ENCODE measurements at regions of chr2 and their contacts with region 1.

Region 1: GRCh38 chr2:148644883-148645538 is 460 bp downstream of the EPC2 start:
- DNase-seq: peak; percentile 93 to 98 (median 95)
- H3K4me3 ChIP-seq: peak overlapping the region; percentile 85 to 98 (median 88)
- H3K4me3 Mint-ChIP-seq: peak overlapping the region; percentile 86 to 96
- H3K27ac ChIP-seq: peak overlapping the region; percentile 89 to 91
- H3K27ac Mint-ChIP-seq: peak overlapping the region; percentile 94 to 99 (median 98)
- H3K4me1 ChIP-seq: peaks cover 24 to 39% of the 10 kb centered on the region in 2 donors
- H3K4me1 Mint-ChIP-seq: peaks cover 43% of the 10 kb centered on the region
- H3K27me3 ChIP-seq: no peaks in the 10 kb centered on the region
- H3K27me3 Mint-ChIP-seq: no peaks in the 10 kb centered on the region
- CTCF ChIP-seq: no peak

Region 2: DNA sequence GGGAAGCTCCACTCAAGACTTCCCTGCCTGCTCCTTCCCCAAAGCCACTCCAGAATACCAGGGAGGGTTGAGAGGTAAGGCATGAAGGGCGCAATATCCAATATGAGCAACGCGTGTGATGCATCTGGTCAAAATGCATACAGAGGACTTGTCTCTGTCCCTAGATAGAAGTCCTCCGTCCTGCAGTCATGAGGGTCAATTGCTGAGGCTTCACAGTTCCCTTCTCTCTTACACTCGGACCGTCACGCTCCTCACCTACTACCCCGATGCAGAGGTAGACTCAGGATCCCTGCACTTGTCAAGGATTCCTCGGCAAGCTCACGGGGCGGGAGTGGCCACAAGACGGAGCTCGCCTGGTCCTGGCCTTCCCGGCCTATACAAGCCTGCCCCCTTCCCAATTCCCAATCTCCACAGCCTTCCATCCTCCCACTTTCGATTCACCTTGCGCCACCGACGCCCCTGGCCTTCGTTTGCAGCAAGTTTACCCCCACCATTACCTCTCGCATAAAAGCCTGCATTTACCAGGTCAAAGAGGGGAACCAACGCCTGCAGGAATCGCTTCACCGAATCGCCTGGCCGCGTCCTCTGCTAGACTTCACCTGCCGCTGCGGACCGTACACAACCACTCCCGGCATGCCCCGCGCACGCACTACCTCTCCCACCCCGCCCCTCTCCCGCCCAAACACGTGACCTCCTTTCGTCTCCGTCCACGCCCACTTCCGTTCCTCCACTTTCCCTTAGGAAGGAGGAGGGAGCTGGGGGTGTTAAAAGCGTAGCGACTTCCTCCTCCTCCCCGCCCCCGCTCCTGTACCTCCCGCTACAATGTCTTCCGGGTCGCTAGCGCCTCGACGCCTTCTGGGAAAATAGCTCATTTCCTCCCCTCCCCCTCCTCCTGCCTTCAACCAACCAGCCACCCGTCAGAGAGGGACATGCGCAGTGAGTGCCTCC is 624.6 kb before region 1 on chr2 and contains the start of gene ORC4:
- intact Hi-C with region 1: loop called in 1 of 2 experiments (anchors 5 kb)
- DNase-seq: peak; percentile 98 to 99 (median 99)
- H3K4me3 ChIP-seq: peak within 1 kb of the TSS; percentile 67 to 95 (median 72)
- H3K4me3 Mint-ChIP-seq: peak within 1 kb of the TSS; percentile 100
- H3K27ac ChIP-seq: peak within 1 kb of the TSS; percentile 93 to 98
- H3K27ac Mint-ChIP-seq: peak within 1 kb of the TSS; percentile 96 to 99 (median 98)
- H3K4me1 ChIP-seq: peaks cover 18 to 40% of the 10 kb centered on the region in 2 donors
- H3K4me1 Mint-ChIP-seq: peaks cover 43% of the 10 kb centered on the region
- H3K27me3 ChIP-seq: no peaks in the 10 kb centered on the region
- H3K27me3 Mint-ChIP-seq: no peaks in the 10 kb centered on the region
- CTCF ChIP-seq: no peak
- polyA plus RNA-seq, gene ORC4: 30.2 to 34.0 (median 33.1) TPM

Region 3: GRCh38 chr2:148614322-148615049 is 30.5 kb before region 1 on chr2:
- intact Hi-C with region 1: loop called in 1 of 2 experiments (anchors 2 kb)
- DNase-seq: peak; percentile 55 to 76 (median 74)
- H3K4me3 ChIP-seq: peak overlapping the region in 2 of 3 experiments; percentile 8 to 57
- H3K4me3 Mint-ChIP-seq: peak overlapping the region; percentile 51 to 83
- H3K27ac ChIP-seq: peak overlapping the region; percentile 62 to 88
- H3K27ac Mint-ChIP-seq: peak overlapping the region; percentile 87 to 94 (median 92)
- H3K4me1 ChIP-seq: peaks cover 24 to 26% of the 10 kb centered on the region in 2 donors
- H3K4me1 Mint-ChIP-seq: peaks cover 28% of the 10 kb centered on the region
- H3K27me3 ChIP-seq: no peaks in the 10 kb centered on the region
- H3K27me3 Mint-ChIP-seq: no peaks in the 10 kb centered on the region
- CTCF ChIP-seq: no peak

Region 4: DNA sequence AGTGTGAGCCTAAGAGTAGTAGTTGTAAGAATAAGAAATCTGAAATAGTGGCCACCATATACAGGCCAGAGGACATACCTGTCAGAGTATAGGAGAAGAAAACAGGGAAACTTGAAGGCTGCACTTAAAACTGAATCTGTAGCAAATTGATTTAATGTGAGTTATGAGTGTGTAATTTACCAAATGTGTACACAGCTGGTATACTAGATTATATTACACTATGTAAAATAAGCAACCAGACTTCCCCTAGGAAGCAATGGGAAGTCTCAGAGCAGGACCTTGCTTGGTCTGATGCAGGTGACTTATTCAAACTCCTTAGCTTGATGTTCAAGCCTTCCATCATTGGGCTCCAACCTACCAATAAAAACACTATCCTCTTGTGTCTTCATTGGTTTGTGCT is 17.8 kb before region 1 on chr2:
- intact Hi-C with region 1: no loop called
- DNase-seq: no peak
- H3K4me3 ChIP-seq: no peak overlapping the region
- H3K4me3 Mint-ChIP-seq: no peak overlapping the region
- H3K27ac ChIP-seq: no peak overlapping the region
- H3K27ac Mint-ChIP-seq: no peak overlapping the region
- H3K4me1 ChIP-seq: no peaks in the 10 kb centered on the region
- H3K4me1 Mint-ChIP-seq: no peaks in the 10 kb centered on the region
- H3K27me3 ChIP-seq: no peaks in the 10 kb centered on the region
- H3K27me3 Mint-ChIP-seq: peaks cover 0 to 2% (median 1%) of the 10 kb centered on the region in 3 donors
- CTCF ChIP-seq: no peak

Measured in CD14-positive monocyte (primary cell).